Activated T-helper 1 cell treated with anti-CD3 and anti-CD28 coated beads, Interleukin-12 subunit alpha, Interleukin-12 subunit beta, Interleukin-2, Interleukin-4 antibody, amounts not matched to agents 30 ng/mL and 10 ng/mL and 1 ng/mL, durations not matched to agents 14 hours and 24 hours and 36 hours (primary cell): ENCODE measurements at regions of chr18 and their contacts with region 1.

Region 1: GRCh38 chr18:45839414-45840395 is 14.2 kb downstream of the SIGLEC15 start:
- DNase-seq: no peak
- H3K4me3 Mint-ChIP-seq: no peak overlapping the region
- H3K27ac Mint-ChIP-seq: no peak overlapping the region
- H3K4me1 Mint-ChIP-seq: no peaks in the 10 kb centered on the region
- H3K27me3 Mint-ChIP-seq: peaks cover 43% of the 10 kb centered on the region

Region 2: GRCh38 chr18:45722899-45723298 is 116.8 kb before region 1 on chr18:
- intact Hi-C with region 1: loop called (anchors 1 kb)
- DNase-seq: peak; percentile 54
- H3K4me3 Mint-ChIP-seq: no peak overlapping the region
- H3K27ac Mint-ChIP-seq: no peak overlapping the region
- H3K4me1 Mint-ChIP-seq: no peaks in the 10 kb centered on the region
- H3K27me3 Mint-ChIP-seq: peaks cover 21% of the 10 kb centered on the region